CD4-positive, alpha-beta memory T cell (primary cell): ENCODE measurements at regions of chr12 and their contacts with region 1.

Region 1: GRCh38 chr12:8989413-8989812 is at the start of gene KLRG1:
- DNase-seq: peak in 4 of 5 donors; percentile 15 to 57 (median 26)
- H3K4me3 ChIP-seq: peak within 1 kb of the TSS in 1 of 2 donors; percentile 22
- H3K4me3 Mint-ChIP-seq: peak within 1 kb of the TSS; percentile 66 to 99 (median 89)
- H3K27ac ChIP-seq: peak within 1 kb of the TSS; percentile 24
- H3K27ac Mint-ChIP-seq: peak within 1 kb of the TSS; percentile 86 to 96 (median 92)
- H3K4me1 ChIP-seq: peaks cover 76% of the 10 kb centered on the region
- H3K4me1 Mint-ChIP-seq: peaks cover 46 to 72% (median 57%) of the 10 kb centered on the region in 4 donors
- H3K27me3 ChIP-seq: no peaks in the 10 kb centered on the region
- H3K27me3 Mint-ChIP-seq: no peaks in the 10 kb centered on the region
- total RNA-seq, gene KLRG1: 51.2 to 55.8 TPM

Region 2: GRCh38 chr12:8960176-8960575 is 29.2 kb before region 1 on chr12:
- CTCF ChIA-PET with region 1: interaction called, 5 read pairs
- POLR2A ChIA-PET with region 1: interaction called, 25 read pairs
- intact Hi-C with region 1: no loop called
- DNase-seq: peak in 4 of 5 donors; percentile 49 to 59 (median 52)
- H3K4me3 ChIP-seq: peak overlapping the region in 1 of 2 donors; percentile 10
- H3K4me3 Mint-ChIP-seq: peak overlapping the region; percentile 27 to 80 (median 68)
- H3K27ac ChIP-seq: peak overlapping the region; percentile 44
- H3K27ac Mint-ChIP-seq: peak overlapping the region; percentile 90 to 96 (median 92)
- H3K4me1 ChIP-seq: peaks cover 68% of the 10 kb centered on the region
- H3K4me1 Mint-ChIP-seq: peaks cover 46 to 86% (median 59%) of the 10 kb centered on the region in 4 donors
- H3K27me3 ChIP-seq: no peaks in the 10 kb centered on the region
- H3K27me3 Mint-ChIP-seq: no peaks in the 10 kb centered on the region